IMR-90 (cell line): ENCODE measurements at regions of chr1 and their contacts with region 1.

Region 1: GRCh38 chr1:155172732-155173477 is at the start of gene KRTCAP2:
- DNase-seq: peak; percentile 95
- ATAC-seq: peak; percentile 80
- H3K4me3 ChIP-seq: peak within 1 kb of the TSS; percentile 81
- H3K27ac ChIP-seq: peak within 1 kb of the TSS; percentile 93
- H3K4me1 ChIP-seq: peaks cover 3% of the 10 kb centered on the region
- H3K27me3 ChIP-seq: no peaks in the 10 kb centered on the region
- CTCF ChIP-seq: peak; percentile 97
- POLR2A ChIP-seq: peak; percentile 87
- RAD21 ChIP-seq: peak; percentile 49
- total RNA-seq, gene KRTCAP2: 76.1 and 76.7 TPM in 2 replicates

Region 2: DNA sequence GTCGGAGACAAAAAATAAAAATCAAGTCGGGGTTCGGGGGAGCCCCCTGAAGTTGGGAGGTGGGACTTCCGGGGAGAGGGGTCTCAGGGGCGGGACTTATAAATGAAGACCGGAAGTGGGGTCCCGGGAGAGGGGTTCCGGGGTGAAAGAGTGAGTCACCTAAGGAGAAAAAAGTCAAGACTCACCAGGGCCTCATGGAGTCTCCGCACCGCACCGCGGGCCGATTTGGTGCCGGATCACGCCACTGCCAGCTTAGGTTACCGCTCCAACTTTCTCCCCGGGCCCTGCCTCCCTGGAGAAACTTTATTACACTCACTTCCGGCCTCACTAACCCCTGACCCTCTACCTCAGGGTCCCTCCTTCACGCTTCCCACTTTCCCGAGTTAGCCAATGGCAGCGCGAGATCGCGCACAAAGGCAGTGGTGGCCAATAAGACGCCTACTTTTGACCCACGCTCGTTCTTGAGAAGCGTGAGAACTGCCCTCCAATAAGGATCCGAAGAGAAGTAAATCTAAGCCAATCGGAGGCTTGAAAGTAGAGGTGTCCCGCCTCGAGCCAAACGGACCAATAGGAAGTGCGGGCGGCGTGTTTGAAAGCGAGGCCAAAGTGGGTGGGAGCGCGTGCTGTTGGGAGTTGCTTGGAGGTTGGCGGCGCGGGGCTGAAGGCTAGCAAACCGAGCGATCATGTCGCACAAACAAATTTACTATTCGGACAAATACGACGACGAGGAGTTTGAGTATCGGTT is 198.7 kb before region 1 on chr1 and contains the start of gene CKS1B:
- CTCF ChIA-PET with region 1: no interaction called
- POLR2A ChIA-PET with region 1: no interaction called
- dilution Hi-C with region 1: no loop called
- in situ Hi-C with region 1: no loop called
- intact Hi-C with region 1: loop called (anchors 10 kb)
- DNase-seq: peak; percentile 100
- ATAC-seq: peak; percentile 62
- H3K4me3 ChIP-seq: peak within 1 kb of the TSS; percentile 57
- H3K27ac ChIP-seq: peak within 1 kb of the TSS; percentile 89
- H3K4me1 ChIP-seq: peaks cover 11% of the 10 kb centered on the region
- H3K27me3 ChIP-seq: no peaks in the 10 kb centered on the region
- CTCF ChIP-seq: no peak
- POLR2A ChIP-seq: peak; percentile 84
- RAD21 ChIP-seq: no peak
- total RNA-seq, gene CKS1B: 129 and 140 TPM in 2 replicates

Region 3: DNA sequence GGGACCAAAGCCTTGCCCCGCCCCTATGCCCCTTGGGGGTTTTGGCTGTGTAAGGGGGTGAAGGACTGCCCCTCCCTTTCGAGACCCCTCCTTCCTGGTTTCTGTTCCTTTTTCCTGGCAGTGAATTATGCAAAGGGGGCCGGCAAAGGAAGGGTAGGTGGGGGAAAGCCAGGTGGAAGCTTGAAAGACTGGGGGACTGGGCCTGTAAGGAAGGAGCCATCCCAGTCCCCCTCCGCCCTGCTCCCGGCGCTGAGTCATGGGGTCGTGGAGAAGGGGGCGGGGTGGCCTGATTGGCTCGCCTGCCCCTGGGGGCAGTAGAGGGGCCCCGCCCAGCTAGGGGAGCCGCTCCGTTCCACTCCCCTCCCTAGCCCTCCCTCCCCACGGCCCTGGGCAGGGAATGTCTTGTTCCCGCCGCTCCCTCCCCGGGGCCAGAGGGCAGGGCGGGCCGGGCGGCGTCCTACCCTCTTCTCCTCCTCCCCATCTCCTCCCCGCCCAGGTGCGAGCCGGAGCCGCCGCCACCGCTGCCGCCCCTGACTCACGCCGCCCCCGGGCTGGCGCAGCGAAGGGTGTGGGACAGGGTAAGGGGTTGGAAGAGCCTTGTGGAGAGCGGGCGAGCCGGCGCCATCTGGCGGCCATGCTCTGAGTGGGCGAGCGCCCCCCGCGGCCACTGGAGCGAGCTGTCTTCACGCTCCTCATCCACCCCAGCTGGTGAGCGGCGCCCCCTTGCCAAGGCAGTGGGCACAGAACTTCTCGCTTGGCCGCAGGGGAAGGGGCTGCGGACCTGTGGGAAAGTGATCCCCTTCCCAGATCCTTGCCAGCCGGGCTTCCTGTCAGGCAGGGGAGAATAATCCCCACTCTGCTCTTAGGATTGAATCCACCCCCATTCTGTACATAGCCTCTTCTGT is 155.6 kb before region 1 on chr1:
- CTCF ChIA-PET with region 1: no interaction called
- POLR2A ChIA-PET with region 1: no interaction called
- dilution Hi-C with region 1: no loop called
- in situ Hi-C with region 1: no loop called
- intact Hi-C with region 1: no loop called
- DNase-seq: peak; percentile 83
- ATAC-seq: peak; percentile 94
- H3K4me3 ChIP-seq: peak overlapping the region; percentile 41
- H3K27ac ChIP-seq: peak overlapping the region; percentile 41
- H3K4me1 ChIP-seq: peaks cover 6% of the 10 kb centered on the region; the same call in 1 of the 2 replicates
- H3K27me3 ChIP-seq: no peaks in the 10 kb centered on the region
- CTCF ChIP-seq: peak; percentile 100; the same call in 1 of the 2 replicates
- POLR2A ChIP-seq: no peak
- RAD21 ChIP-seq: peak; percentile 83

Region 4: DNA sequence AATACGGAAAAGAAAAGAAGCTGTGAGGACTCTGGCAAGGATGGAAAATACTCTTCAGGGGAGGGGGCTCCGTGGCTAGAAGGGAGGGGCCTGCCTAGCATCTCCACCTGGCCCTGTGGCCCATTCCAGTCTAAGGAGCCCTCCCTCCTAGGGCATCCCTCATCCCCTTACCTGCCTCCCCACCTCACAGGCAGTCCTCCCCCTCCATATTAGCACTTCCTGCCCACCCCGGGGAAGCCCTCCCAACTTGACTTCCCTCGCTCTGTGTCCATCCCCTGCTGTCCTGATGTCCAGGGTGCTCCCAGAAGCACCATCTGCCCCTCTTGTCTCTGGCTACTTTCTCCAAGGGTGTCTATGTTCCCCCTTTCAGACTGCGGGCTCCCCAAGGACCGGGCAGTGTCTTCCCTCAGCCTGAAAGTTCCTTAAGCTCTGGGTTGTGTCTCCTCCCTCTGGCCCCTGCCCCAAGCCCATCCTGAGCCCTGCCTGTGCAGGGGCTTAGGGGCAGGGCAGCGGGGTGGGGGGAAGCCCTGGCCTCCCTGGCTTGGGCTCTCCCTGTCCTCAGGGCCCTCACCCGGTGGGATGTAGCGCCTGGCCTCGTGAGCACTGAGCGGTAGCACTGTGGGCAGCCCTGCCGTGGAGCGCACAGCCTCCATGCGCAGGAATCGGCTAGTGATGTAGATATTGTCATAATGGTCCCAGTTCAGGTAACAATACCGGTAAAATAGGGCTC is 143.2 kb before region 1 on chr1:
- CTCF ChIA-PET with region 1: no interaction called
- POLR2A ChIA-PET with region 1: no interaction called
- dilution Hi-C with region 1: no loop called
- in situ Hi-C with region 1: no loop called
- intact Hi-C with region 1: no loop called
- DNase-seq: no peak
- ATAC-seq: no peak
- H3K4me3 ChIP-seq: no peak overlapping the region
- H3K27ac ChIP-seq: no peak overlapping the region
- H3K4me1 ChIP-seq: peaks cover 3% of the 10 kb centered on the region; the same call in 1 of the 2 replicates
- H3K27me3 ChIP-seq: peaks cover 33% of the 10 kb centered on the region
- CTCF ChIP-seq: no peak
- POLR2A ChIP-seq: no peak
- RAD21 ChIP-seq: no peak

Region 5: GRCh38 chr1:155070721-155071569 is 102.0 kb before region 1 on chr1:
- CTCF ChIA-PET with region 1: no interaction called
- POLR2A ChIA-PET with region 1: no interaction called
- dilution Hi-C with region 1: no loop called
- in situ Hi-C with region 1: no loop called
- intact Hi-C with region 1: no loop called
- DNase-seq: peak; percentile 64
- ATAC-seq: peak; percentile 90
- H3K4me3 ChIP-seq: peak overlapping the region; percentile 34
- H3K27ac ChIP-seq: no peak overlapping the region; the same call in 1 of the 2 replicates
- H3K4me1 ChIP-seq: peaks cover 5% of the 10 kb centered on the region; the same call in 1 of the 2 replicates
- H3K27me3 ChIP-seq: peaks cover 20% of the 10 kb centered on the region
- CTCF ChIP-seq: peak; percentile 27; the same call in 1 of the 2 replicates
- POLR2A ChIP-seq: no peak
- RAD21 ChIP-seq: no peak

Region 6: DNA sequence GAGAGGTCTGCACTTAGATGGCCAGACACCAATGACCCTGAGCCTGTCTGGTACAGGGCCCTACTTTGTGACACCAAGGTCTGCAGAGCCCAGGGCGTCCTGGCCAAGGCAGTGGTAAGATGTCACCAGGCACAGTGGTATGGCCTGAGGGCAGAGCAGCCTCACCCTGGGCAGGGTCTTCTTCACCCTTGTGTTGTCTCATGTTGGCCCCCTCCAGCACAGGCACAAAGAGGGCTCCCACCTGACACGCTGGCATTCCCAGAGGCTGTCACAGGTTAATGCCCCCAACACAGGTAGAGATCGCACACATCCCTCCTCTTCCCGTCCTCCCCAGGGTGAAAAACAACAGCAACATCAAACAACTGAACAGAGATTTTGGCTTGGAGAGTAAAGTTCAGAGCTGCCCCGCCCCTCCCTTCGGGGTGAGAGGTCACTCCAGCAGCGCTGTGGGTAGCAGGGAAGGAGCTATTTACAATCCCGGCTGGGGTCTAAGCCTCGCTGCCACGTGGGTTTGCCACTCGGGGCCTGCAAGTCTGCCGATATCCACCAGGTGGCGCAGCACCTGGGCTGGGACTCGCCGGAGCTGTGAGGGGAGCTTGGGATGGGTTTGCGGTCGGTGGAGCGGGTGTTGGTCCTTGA is 81.7 kb before region 1 on chr1:
- CTCF ChIA-PET with region 1: interaction called, 18 read pairs
- POLR2A ChIA-PET with region 1: interaction called, 5 read pairs
- dilution Hi-C with region 1: no loop called
- in situ Hi-C with region 1: loop called (anchors 5 kb)
- intact Hi-C with region 1: no loop called
- DNase-seq: peak; percentile 54
- ATAC-seq: peak; percentile 90
- H3K4me3 ChIP-seq: no peak overlapping the region
- H3K27ac ChIP-seq: no peak overlapping the region
- H3K4me1 ChIP-seq: peaks cover 8% of the 10 kb centered on the region; the same call in 1 of the 2 replicates
- H3K27me3 ChIP-seq: peaks cover 15% of the 10 kb centered on the region
- CTCF ChIP-seq: peak; percentile 93
- POLR2A ChIP-seq: no peak
- RAD21 ChIP-seq: peak; percentile 81

Region 7: DNA sequence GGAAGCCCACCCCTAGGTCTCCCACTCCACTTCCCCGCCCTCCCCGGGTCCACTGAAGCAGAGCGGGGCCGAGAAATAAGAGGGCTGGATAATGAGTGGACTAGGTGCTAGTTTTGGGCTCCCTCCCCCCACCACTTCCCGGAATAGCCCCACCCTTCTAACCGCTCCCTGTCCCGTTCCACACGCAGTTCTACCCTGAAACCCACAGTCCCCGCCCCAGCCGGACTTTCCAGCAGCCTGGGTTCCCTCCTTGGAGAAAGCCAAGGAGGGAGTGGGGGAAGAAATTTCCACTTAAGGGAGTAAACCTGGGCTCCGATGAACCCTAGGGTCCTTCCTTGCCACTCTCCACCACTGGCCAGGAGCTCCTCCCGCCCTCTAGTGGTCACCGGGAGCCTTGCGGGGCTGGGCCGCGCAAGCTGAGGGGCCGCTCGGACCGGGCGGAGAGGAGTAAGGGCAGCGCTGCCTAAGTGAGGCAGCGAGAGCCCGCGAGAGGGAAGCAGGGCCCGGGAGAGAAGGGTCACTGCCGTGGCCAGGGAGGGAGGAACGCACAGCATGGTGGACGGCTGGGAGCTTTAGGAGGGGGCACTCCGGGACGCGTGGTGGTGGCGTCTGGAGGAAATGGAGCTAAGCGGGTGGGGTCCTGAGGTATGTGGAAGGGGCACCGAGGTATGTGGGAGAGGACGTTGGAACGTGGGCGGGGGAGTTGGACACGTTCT is 20.5 kb after region 1 on chr1:
- CTCF ChIA-PET with region 1: interaction called, 19 read pairs
- POLR2A ChIA-PET with region 1: interaction called, 4 read pairs
- dilution Hi-C with region 1: no loop called
- in situ Hi-C with region 1: no loop called
- intact Hi-C with region 1: no loop called
- DNase-seq: peak; percentile 81
- ATAC-seq: peak; percentile 86
- H3K4me3 ChIP-seq: peak overlapping the region; percentile 43
- H3K27ac ChIP-seq: peak overlapping the region; percentile 80
- H3K4me1 ChIP-seq: peaks cover 17% of the 10 kb centered on the region
- H3K27me3 ChIP-seq: no peaks in the 10 kb centered on the region
- CTCF ChIP-seq: peak; percentile 96
- POLR2A ChIP-seq: peak; percentile 73
- RAD21 ChIP-seq: peak; percentile 64

Region 8: GRCh38 chr1:155227261-155228095 is 54.6 kb after region 1 on chr1:
- CTCF ChIA-PET with region 1: no interaction called
- POLR2A ChIA-PET with region 1: interaction called, 3 read pairs
- dilution Hi-C with region 1: no loop called
- in situ Hi-C with region 1: no loop called
- intact Hi-C with region 1: loop called (anchors 1 kb)
- DNase-seq: peak; percentile 99
- ATAC-seq: peak; percentile 94
- H3K4me3 ChIP-seq: peak overlapping the region; percentile 49
- H3K27ac ChIP-seq: peak overlapping the region; percentile 87
- H3K4me1 ChIP-seq: peaks cover 22% of the 10 kb centered on the region
- H3K27me3 ChIP-seq: no peaks in the 10 kb centered on the region
- CTCF ChIP-seq: no peak
- POLR2A ChIP-seq: peak; percentile 85
- RAD21 ChIP-seq: no peak

Region 9: DNA sequence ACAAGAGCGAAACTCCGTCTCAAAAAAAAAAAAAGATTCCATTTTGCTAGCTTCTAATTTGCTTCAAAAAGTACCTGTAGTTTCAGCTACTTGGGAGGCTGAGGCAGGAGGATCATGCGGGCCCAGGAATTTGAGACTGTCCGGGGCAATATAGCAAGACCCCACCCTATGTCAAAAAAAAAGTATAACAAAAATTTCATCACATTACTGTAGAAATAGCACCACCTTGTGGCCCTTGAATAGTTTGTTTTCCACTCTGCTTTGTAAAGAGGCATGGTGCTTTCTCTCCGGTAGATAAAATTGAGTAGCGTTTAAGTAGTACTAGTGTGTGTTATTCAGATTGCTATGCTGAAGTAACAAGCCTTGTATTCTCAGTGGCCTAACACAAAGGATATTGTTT is 418.9 kb after region 1 on chr1:
- CTCF ChIA-PET with region 1: no interaction called
- POLR2A ChIA-PET with region 1: no interaction called
- dilution Hi-C with region 1: no loop called
- in situ Hi-C with region 1: no loop called
- intact Hi-C with region 1: loop called (anchors 10 kb)
- DNase-seq: peak; percentile 68
- ATAC-seq: peak; percentile 76
- H3K4me3 ChIP-seq: no peak overlapping the region
- H3K27ac ChIP-seq: no peak overlapping the region
- H3K4me1 ChIP-seq: no peaks in the 10 kb centered on the region
- H3K27me3 ChIP-seq: no peaks in the 10 kb centered on the region
- CTCF ChIP-seq: peak; percentile 60
- POLR2A ChIP-seq: no peak
- RAD21 ChIP-seq: peak; percentile 69

Region 10: DNA sequence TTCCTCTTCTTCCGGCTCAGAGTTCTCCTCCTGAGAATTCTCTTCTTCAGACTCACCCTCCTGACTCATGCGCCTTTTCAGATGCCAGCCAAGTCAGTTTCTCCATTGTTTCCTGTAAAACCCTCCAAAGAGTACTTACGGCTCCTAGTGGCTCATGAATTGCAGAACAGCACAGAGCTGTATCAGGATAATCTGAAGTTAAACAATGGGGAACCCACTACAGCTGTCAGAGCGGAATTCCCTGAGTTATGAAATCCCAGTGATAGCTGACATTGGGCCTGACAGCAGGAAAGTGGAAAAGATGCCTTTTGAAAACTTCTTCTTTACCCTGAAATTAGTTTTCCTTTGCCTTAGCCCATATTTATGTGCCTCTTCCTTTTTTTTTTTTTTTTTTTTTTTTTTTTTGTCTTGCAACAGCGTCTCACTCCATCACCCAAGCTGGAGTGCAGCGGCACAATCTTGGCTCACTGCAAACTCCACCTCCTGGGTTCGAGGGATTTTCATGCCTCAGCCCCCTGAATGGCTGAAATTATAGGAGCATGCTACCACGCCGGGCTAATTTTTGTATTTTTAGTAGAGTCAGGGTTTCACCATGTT is 475.7 kb after region 1 on chr1:
- CTCF ChIA-PET with region 1: no interaction called
- POLR2A ChIA-PET with region 1: no interaction called
- dilution Hi-C with region 1: no loop called
- in situ Hi-C with region 1: no loop called
- intact Hi-C with region 1: loop called (anchors 1 kb)
- DNase-seq: peak; percentile 94
- ATAC-seq: peak; percentile 92
- H3K4me3 ChIP-seq: peak overlapping the region; percentile 32; the same call in 1 of the 2 replicates
- H3K27ac ChIP-seq: peak overlapping the region; percentile 69; the same call in 1 of the 2 replicates
- H3K4me1 ChIP-seq: peaks cover 8% of the 10 kb centered on the region
- H3K27me3 ChIP-seq: no peaks in the 10 kb centered on the region
- CTCF ChIP-seq: peak; percentile 83
- POLR2A ChIP-seq: 0 out of 2 replicates have a peak, but pooled peaks have one; percentile 18
- RAD21 ChIP-seq: peak; percentile 81